Activated CD8-positive, alpha-beta T cell treated with anti-CD3 and anti-CD28 coated beads for 36 hours (primary cell): ENCODE measurements at regions of chr17 and their contacts with region 1.

Region 1: GRCh38 chr17:6913608-6914443 is 82.0 kb upstream of the ALOX12 start:
- DNase-seq: peak; percentile 91
- ATAC-seq: peak; percentile 94
- H3K4me3 Mint-ChIP-seq: peak overlapping the region; percentile 71
- H3K27ac Mint-ChIP-seq: no peak overlapping the region
- H3K4me1 Mint-ChIP-seq: peaks cover 6% of the 10 kb centered on the region
- H3K27me3 Mint-ChIP-seq: peaks cover 4% of the 10 kb centered on the region
- CTCF ChIP-seq: peak; percentile 95

Region 2: DNA sequence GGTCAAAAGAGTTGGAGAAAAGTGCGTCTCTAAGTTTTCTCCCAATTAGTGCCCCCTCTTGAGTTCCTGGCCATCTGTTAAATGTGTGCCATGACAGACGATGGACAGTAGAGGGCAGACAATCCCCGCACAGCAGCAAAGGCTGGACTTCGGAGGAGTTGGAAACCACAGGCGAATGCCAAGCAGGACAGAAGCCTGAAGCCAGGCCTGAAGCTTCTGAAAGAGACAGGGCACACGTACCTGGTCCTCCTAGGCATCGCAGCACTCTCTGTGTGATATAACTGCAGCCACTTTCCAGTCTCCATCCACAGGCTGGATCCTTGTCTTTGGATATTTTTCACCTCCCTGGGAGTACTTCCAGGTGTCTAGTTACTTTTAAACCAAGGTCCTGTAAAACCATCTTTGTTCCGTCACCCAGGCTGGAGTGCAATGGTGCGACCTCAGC is 247.7 kb before region 1 on chr17:
- CTCF ChIA-PET with region 1: interaction called, 13 read pairs
- POLR2A ChIA-PET with region 1: no interaction called
- intact Hi-C with region 1: no loop called
- DNase-seq: peak; percentile 63
- ATAC-seq: peak; percentile 81
- H3K4me3 Mint-ChIP-seq: no peak overlapping the region
- H3K27ac Mint-ChIP-seq: no peak overlapping the region
- H3K4me1 Mint-ChIP-seq: peaks cover 20% of the 10 kb centered on the region
- H3K27me3 Mint-ChIP-seq: no peaks in the 10 kb centered on the region
- CTCF ChIP-seq: peak; percentile 93

Region 3: GRCh38 chr17:6868579-6868978 is 45.2 kb before region 1 on chr17:
- CTCF ChIA-PET with region 1: interaction called, 11 read pairs
- POLR2A ChIA-PET with region 1: no interaction called
- intact Hi-C with region 1: no loop called
- DNase-seq: no peak
- ATAC-seq: no peak
- H3K4me3 Mint-ChIP-seq: no peak overlapping the region
- H3K27ac Mint-ChIP-seq: no peak overlapping the region
- H3K4me1 Mint-ChIP-seq: no peaks in the 10 kb centered on the region
- H3K27me3 Mint-ChIP-seq: peaks cover 13% of the 10 kb centered on the region
- CTCF ChIP-seq: no peak

Region 4: GRCh38 chr17:6903326-6903900 is 10.4 kb before region 1 on chr17:
- CTCF ChIA-PET with region 1: interaction called, 11 read pairs
- POLR2A ChIA-PET with region 1: no interaction called
- intact Hi-C with region 1: no loop called
- DNase-seq: no peak
- ATAC-seq: no peak
- H3K4me3 Mint-ChIP-seq: no peak overlapping the region
- H3K27ac Mint-ChIP-seq: no peak overlapping the region
- H3K4me1 Mint-ChIP-seq: no peaks in the 10 kb centered on the region
- H3K27me3 Mint-ChIP-seq: no peaks in the 10 kb centered on the region
- CTCF ChIP-seq: no peak

Region 5: GRCh38 chr17:6936370-6937028 is 22.7 kb after region 1 on chr17:
- CTCF ChIA-PET with region 1: interaction called, 10 read pairs
- POLR2A ChIA-PET with region 1: interaction called, 3 read pairs
- intact Hi-C with region 1: no loop called
- DNase-seq: no peak
- ATAC-seq: peak; percentile 58
- H3K4me3 Mint-ChIP-seq: peak overlapping the region; percentile 4
- H3K27ac Mint-ChIP-seq: peak overlapping the region; percentile 24
- H3K4me1 Mint-ChIP-seq: no peaks in the 10 kb centered on the region
- H3K27me3 Mint-ChIP-seq: no peaks in the 10 kb centered on the region
- CTCF ChIP-seq: no peak

Region 6: DNA sequence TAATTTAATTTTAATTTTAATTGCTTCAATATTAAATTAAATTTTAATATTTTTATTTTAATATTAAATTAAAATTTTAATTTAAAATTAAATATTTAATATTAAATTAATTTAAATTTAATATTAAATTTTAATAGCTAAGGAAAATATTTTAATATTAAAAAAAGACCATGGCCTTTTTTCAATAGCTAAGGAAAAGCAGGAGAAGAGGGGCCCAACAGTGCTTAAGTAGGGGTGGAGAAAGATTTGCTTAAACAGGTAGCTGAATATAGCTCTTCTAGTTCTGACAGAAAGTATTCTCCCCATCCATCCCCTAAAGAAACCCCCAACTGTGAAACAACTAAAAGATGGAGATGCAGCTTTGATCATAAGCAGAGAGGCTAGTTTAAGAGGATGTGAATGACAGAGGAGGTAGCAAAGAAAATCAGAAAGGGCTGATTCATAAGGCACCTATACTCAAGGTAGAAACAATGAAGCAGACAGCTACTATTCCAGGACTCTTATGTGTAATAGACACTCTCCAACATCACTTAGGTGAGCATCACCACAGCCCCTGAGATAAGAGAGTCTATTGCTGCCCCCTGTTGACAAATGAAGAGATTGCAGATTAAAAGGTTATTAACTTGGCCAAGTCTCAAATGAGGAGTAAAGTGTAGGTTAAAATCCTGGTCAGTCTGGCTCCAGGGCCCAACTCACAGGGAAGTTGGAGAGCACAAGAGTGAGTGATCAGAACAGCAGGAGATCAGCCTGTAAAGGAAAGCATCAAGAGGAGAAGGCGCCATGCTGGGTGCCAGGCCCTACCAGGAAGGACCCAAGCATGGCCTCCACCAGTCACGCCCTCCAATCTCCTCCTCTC is 90.8 kb after region 1 on chr17:
- CTCF ChIA-PET with region 1: interaction called, 284 read pairs
- POLR2A ChIA-PET with region 1: interaction called, 9 read pairs
- intact Hi-C with region 1: loop called (anchors 2 kb)
- DNase-seq: peak; percentile 52
- ATAC-seq: peak; percentile 95
- H3K4me3 Mint-ChIP-seq: no peak overlapping the region
- H3K27ac Mint-ChIP-seq: no peak overlapping the region
- H3K4me1 Mint-ChIP-seq: peaks cover 21% of the 10 kb centered on the region
- H3K27me3 Mint-ChIP-seq: no peaks in the 10 kb centered on the region
- CTCF ChIP-seq: peak; percentile 90

Region 7: GRCh38 chr17:7021993-7022778 is 108.4 kb after region 1 on chr17:
- CTCF ChIA-PET with region 1: interaction called, 47 read pairs
- POLR2A ChIA-PET with region 1: no interaction called
- intact Hi-C with region 1: loop called (anchors 5 kb)
- DNase-seq: peak; percentile 88
- ATAC-seq: peak; percentile 78
- H3K4me3 Mint-ChIP-seq: peak overlapping the region; percentile 72
- H3K27ac Mint-ChIP-seq: peak overlapping the region; percentile 63
- H3K4me1 Mint-ChIP-seq: peaks cover 45% of the 10 kb centered on the region
- H3K27me3 Mint-ChIP-seq: no peaks in the 10 kb centered on the region
- CTCF ChIP-seq: peak; percentile 95

Region 8: DNA sequence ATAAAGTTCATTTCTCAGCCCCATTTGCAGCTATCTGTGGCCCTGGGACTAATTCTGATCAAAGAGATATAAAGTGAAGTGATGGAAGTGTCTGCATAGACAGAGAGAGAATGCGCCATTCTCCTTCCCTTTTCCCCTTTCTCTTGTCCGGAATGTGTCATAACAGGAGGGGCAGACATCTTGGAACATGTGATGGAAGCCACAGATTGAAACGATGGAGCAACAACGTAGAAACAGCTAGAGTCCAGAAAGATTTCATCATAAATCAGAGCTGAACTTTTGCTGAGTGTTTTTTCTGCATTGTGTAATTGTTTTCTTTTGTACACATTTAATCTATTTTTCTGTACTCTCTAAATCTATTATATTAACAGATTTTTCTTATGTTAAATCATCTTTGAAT is 254.0 kb after region 1 on chr17:
- CTCF ChIA-PET with region 1: no interaction called
- POLR2A ChIA-PET with region 1: no interaction called
- intact Hi-C with region 1: no loop called
- DNase-seq: no peak
- ATAC-seq: no peak
- H3K4me3 Mint-ChIP-seq: no peak overlapping the region
- H3K27ac Mint-ChIP-seq: no peak overlapping the region
- H3K4me1 Mint-ChIP-seq: no peaks in the 10 kb centered on the region
- H3K27me3 Mint-ChIP-seq: peaks cover 4% of the 10 kb centered on the region
- CTCF ChIP-seq: no peak